Activated T-helper 2 cell treated with anti-CD3 and anti-CD28 coated beads, Interferon-gamma antibody, Interleukin-2, Interleukin-4, amounts not matched to agents 10 μg/mL and 5 μg/mL and 100 μg/mL, durations not matched to agents 14 hours and 24 hours and 36 hours (primary cell): ENCODE measurements at regions of chr14 and their contacts with region 1.

Region 1: GRCh38 chr14:90677484-90678050 is 138.7 kb downstream of the TTC7B start:
- DNase-seq: no peak
- H3K4me3 Mint-ChIP-seq: peak overlapping the region; percentile 59
- H3K27ac Mint-ChIP-seq: peak overlapping the region; percentile 92
- H3K4me1 Mint-ChIP-seq: peaks cover 40% of the 10 kb centered on the region
- H3K27me3 Mint-ChIP-seq: peaks cover 3% of the 10 kb centered on the region

Region 2: DNA sequence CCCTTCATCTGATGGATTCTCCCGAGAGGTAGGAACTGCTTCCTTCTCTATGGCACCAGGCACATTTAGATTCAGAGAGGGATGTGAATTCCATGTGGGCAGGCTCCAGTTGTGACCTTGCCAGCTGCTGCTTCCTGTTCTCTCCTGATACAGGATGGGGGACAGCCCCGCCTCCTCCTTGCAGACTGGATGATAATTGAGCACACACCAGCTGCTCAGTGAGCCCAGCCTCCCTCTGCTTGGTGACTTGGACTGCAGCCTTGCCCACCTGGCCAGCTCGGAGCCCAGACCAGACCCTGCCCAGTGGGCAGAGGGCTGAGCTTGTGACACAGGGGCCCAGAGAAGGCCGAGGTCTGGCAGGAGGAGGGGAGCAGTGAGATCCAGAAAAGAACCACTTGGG is 190.5 kb before region 1 on chr14:
- intact Hi-C with region 1: no loop called
- DNase-seq: no peak
- H3K4me3 Mint-ChIP-seq: no peak overlapping the region
- H3K27ac Mint-ChIP-seq: no peak overlapping the region
- H3K4me1 Mint-ChIP-seq: no peaks in the 10 kb centered on the region
- H3K27me3 Mint-ChIP-seq: peaks cover 4% of the 10 kb centered on the region

Region 3: DNA sequence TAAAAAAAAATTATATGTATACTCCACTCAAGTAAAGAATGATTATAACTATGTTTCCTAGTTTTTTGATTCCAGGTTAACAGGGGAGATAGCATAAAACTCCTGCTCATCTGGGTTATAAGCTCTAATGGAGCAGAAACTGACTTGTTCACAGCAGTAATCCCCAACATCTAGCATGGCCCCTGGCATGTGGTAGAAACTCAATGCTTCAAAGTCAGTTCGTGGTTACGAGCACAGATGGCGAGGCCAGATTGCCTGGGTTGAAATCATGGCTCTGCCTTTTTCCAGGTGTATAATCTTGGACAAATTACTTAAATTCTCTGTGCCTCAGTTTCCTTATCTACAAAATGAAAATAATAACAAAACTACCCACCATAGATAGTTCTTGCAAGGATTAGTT is 45.1 kb before region 1 on chr14:
- intact Hi-C with region 1: loop called (anchors 1 kb)
- DNase-seq: no peak
- H3K4me3 Mint-ChIP-seq: no peak overlapping the region
- H3K27ac Mint-ChIP-seq: no peak overlapping the region
- H3K4me1 Mint-ChIP-seq: peaks cover 13% of the 10 kb centered on the region
- H3K27me3 Mint-ChIP-seq: no peaks in the 10 kb centered on the region

Region 4: DNA sequence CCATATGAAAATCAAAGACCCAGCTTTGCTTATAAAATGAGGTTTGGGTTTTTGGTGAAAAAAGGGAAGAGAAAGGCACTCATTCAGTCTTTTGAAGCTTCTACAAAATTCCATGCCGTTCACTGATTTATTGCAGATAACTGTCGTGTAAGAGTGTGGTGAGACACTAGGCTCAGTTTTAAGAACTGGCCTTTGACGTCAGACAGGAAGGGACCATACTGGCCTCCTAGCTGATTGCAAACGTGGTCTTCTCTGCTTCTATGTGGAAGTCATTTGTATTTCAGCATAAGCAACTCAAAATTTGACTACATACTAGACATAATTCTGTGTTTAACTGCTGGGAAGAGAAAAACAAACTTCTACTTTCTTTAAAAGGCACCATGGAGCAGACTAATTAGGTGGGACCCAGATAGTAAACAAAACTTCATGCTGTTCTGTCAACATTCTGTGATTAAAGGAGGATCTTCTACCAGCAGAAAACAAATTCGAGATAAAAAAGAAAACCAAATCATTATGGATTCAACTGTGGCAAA is 30.0 kb before region 1 on chr14:
- intact Hi-C with region 1: no loop called
- DNase-seq: no peak
- H3K4me3 Mint-ChIP-seq: no peak overlapping the region
- H3K27ac Mint-ChIP-seq: no peak overlapping the region
- H3K4me1 Mint-ChIP-seq: no peaks in the 10 kb centered on the region
- H3K27me3 Mint-ChIP-seq: peaks cover 2% of the 10 kb centered on the region

Region 5: GRCh38 chr14:90658541-90658967 is 19.0 kb before region 1 on chr14:
- intact Hi-C with region 1: loop called (anchors 2 kb)
- DNase-seq: no peak
- H3K4me3 Mint-ChIP-seq: no peak overlapping the region
- H3K27ac Mint-ChIP-seq: no peak overlapping the region
- H3K4me1 Mint-ChIP-seq: peaks cover 13% of the 10 kb centered on the region
- H3K27me3 Mint-ChIP-seq: peaks cover 7% of the 10 kb centered on the region